Posterior vena cava (tissue), 2 donors: ENCODE measurements at regions of chr7 and their contacts with region 1.

Region 1: DNA sequence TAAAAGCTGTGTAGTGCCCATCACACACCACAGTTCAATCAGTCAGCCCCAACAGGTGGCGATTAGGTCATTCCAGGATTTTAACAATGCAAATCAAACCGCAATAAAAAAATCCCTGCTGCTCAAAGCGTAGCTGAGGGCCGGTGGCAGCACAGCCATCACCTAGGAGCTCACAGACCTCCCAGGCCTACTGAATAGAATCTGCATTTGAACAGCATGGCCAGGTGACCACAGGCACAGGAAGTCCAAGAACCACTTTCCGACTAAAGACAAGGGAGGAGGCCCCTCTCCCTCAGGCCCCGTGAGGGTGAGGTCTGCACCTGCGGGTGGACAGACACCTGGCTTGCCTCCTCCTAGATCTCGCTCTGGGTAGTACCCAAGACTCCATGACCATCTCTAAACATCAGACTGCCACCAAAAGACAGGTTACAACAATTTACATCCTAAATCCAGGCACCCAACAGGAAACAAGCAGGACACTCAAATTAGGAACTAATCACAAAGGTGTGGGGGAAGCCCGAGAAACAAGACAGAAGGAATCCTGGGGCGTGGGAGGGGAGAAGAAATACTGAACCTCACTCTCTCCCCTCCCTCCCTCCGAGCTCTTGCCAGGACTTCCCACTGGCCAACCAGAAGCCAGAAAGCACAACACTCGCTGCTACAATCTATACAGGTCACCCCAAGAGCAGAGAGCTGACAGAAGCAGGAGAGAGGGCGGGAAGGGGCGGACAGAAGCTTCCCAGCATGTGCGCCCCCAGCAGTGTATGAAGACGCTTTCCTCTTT is 19.2 kb downstream of the GNA12 start:
- DNase-seq: no peak

Region 2: GRCh38 chr7:3117488-3118231 is 292.8 kb after region 1 on chr7:
- intact Hi-C with region 1: loop called in 1 of 2 experiments (anchors 5 kb)
- DNase-seq: no peak